ENCODE measurements at regions of chr7 and their contacts with region 1.

Region 1: GRCh38 chr7:129224251-129225205 is at the start of gene AHCYL2:
- DNase-seq: peak; percentile 95 to 98 (median 96)
- H3K4me3 ChIP-seq: peak within 1 kb of the TSS; percentile 87 to 98
- H3K4me3 Mint-ChIP-seq: peak within 1 kb of the TSS; percentile 94 to 98 (median 95)
- H3K27ac ChIP-seq: peak within 1 kb of the TSS; percentile 80
- H3K27ac Mint-ChIP-seq: peak within 1 kb of the TSS; percentile 86 to 99 (median 97)
- H3K4me1 ChIP-seq: peaks cover 28% of the 10 kb centered on the region
- H3K4me1 Mint-ChIP-seq: peaks cover 28 to 48% (median 35%) of the 10 kb centered on the region in 4 donors
- H3K27me3 ChIP-seq: no peaks in the 10 kb centered on the region
- H3K27me3 Mint-ChIP-seq: no peaks in the 10 kb centered on the region
- total RNA-seq, gene AHCYL2: 15.4 to 16.5 TPM

Region 2: DNA sequence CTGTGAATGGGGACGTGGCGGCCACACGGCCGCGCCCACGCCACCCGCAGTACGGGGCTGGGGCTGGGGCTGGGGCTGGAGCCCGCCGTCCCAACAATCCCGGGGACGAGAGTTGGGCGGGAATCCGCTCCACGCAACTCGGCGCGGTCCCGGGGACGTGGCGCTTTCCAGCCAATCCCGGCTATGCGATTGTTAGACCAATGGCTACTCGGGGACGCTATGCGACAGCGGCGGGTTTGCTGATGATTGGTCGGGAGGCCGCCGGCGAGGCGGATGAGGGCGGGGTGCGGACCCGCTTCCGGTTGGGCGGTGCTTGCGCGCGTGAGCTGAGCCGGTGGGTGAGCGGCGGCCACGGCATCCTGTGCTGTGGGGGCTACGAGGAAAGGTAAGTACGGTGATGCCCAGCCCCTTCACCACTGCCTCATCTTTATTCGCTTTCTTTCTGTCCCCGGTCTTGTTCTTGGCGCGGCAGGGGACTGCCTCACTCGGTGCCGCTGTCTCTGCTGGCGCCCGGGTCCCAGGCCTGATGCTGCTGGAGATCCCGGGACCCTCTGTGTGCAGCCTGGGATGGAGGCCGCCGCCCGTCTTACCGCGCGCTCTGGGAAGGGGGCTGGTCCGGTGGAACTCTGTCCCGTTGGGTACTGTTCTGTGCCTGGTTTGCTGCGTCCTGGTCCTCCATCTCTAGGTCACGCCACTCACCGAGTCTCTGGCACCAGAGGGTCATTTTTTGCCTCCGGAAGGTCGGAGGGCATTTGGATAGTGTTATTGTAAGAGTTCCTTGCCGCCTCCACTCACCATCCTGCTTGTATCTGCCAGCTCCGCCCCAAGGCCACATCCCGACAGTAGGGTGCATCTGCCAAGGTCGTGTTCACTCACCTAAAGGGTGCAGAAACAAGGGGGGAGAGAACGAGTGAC is 485.2 kb before region 1 on chr7 and contains the start of gene CALU:
- CTCF ChIA-PET with region 1: no interaction called
- POLR2A ChIA-PET with region 1: no interaction called
- intact Hi-C with region 1: loop called (anchors 5 kb)
- DNase-seq: peak; percentile 93 to 95 (median 94)
- H3K4me3 ChIP-seq: peak within 1 kb of the TSS; percentile 80 to 82
- H3K4me3 Mint-ChIP-seq: peak within 1 kb of the TSS; percentile 98 to 100 (median 99)
- H3K27ac ChIP-seq: peak within 1 kb of the TSS; percentile 91
- H3K27ac Mint-ChIP-seq: peak within 1 kb of the TSS; percentile 97 to 100 (median 98)
- H3K4me1 ChIP-seq: peaks cover 38% of the 10 kb centered on the region
- H3K4me1 Mint-ChIP-seq: peaks cover 27 to 50% (median 39%) of the 10 kb centered on the region in 4 donors
- H3K27me3 ChIP-seq: no peaks in the 10 kb centered on the region
- H3K27me3 Mint-ChIP-seq: peaks cover 0 to 3% of the 10 kb centered on the region in 2 donors
- total RNA-seq, gene CALU: 18.4 to 20.6 TPM

Region 3: GRCh38 chr7:128940494-128941322 is 283.8 kb before region 1 on chr7:
- CTCF ChIA-PET with region 1: no interaction called
- POLR2A ChIA-PET with region 1: no interaction called
- intact Hi-C with region 1: no loop called
- DNase-seq: peak in 2 of 5 donors; percentile 9 to 24
- H3K4me3 ChIP-seq: peak overlapping the region in 1 of 2 donors; percentile 6
- H3K4me3 Mint-ChIP-seq: peak overlapping the region; percentile 58 to 97 (median 93)
- H3K27ac ChIP-seq: peak overlapping the region; percentile 60
- H3K27ac Mint-ChIP-seq: peak overlapping the region; percentile 75 to 91 (median 84)
- H3K4me1 ChIP-seq: peaks cover 32% of the 10 kb centered on the region
- H3K4me1 Mint-ChIP-seq: peaks cover 15 to 43% (median 32%) of the 10 kb centered on the region in 4 donors
- H3K27me3 ChIP-seq: no peaks in the 10 kb centered on the region
- H3K27me3 Mint-ChIP-seq: peaks cover 0 to 3% of the 10 kb centered on the region in 2 donors

Region 4: GRCh38 chr7:129041142-129042085 is 183.1 kb before region 1 on chr7:
- CTCF ChIA-PET with region 1: no interaction called
- POLR2A ChIA-PET with region 1: no interaction called
- intact Hi-C with region 1: no loop called
- DNase-seq: no peak
- H3K4me3 ChIP-seq: no peak overlapping the region
- H3K4me3 Mint-ChIP-seq: peak overlapping the region in 2 of 8 donors; percentile 1 to 11
- H3K27ac ChIP-seq: no peak overlapping the region
- H3K27ac Mint-ChIP-seq: peak overlapping the region in 5 of 7 donors; percentile 6 to 79 (median 22)
- H3K4me1 ChIP-seq: peaks cover 58% of the 10 kb centered on the region
- H3K4me1 Mint-ChIP-seq: peaks cover 52 to 81% (median 66%) of the 10 kb centered on the region in 4 donors
- H3K27me3 ChIP-seq: no peaks in the 10 kb centered on the region
- H3K27me3 Mint-ChIP-seq: no peaks in the 10 kb centered on the region

Region 5: DNA sequence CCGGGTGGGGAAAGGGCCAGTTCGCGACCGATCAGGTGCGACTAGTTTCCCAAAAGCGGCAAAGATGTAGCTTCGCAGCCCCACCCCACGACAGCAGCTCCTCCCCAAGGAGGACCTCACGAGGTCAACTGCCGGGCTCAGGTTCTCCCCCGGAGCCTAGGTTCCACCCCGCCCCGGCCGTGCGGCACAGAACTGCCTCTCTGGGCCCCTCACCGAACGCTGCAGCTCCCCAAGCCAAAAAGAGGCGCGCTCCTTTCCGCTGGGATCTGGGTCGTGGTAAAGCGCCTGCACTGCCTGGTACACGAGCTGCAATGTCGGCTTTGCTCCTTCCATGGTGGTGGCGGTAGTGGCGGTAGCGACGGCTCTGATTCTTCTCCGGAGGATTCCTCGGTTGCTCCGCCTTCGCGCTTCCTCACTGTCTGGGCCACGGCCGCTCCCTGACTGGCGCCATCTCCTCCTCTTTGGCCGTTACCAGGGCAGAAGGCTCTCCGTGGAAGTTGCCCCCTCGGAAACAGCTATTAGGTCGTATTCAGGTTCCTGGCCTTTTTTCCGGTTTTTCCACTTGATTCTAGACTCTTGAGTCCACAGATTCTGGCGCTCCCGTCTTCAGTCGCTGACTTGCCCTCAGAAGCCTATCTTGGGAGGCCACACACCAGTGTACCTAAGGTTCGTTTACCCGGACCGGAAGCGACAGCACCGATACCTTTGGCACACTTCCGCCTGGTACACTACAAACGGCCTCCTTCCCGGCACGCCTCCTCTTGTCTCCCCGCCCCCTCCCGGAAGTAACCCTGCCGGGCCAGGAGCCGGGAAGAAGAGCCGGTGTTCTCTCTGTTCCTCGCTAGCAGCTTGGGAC is 169.9 kb before region 1 on chr7 and contains the start of gene TNPO3:
- CTCF ChIA-PET with region 1: no interaction called
- POLR2A ChIA-PET with region 1: no interaction called
- intact Hi-C with region 1: loop called (anchors 1 kb)
- DNase-seq: peak; percentile 87 to 91 (median 88)
- H3K4me3 ChIP-seq: peak within 1 kb of the TSS; percentile 80 to 91
- H3K4me3 Mint-ChIP-seq: peak within 1 kb of the TSS; percentile 94 to 100 (median 98)
- H3K27ac ChIP-seq: peak within 1 kb of the TSS; percentile 82
- H3K27ac Mint-ChIP-seq: peak within 1 kb of the TSS; percentile 98 to 100 (median 99)
- H3K4me1 ChIP-seq: peaks cover 31% of the 10 kb centered on the region
- H3K4me1 Mint-ChIP-seq: peaks cover 20 to 51% (median 38%) of the 10 kb centered on the region in 4 donors
- H3K27me3 ChIP-seq: no peaks in the 10 kb centered on the region
- H3K27me3 Mint-ChIP-seq: peaks cover 3 to 7% of the 10 kb centered on the region in 2 donors
- total RNA-seq, gene TNPO3: 41.7 to 44.5 TPM

Region 6: DNA sequence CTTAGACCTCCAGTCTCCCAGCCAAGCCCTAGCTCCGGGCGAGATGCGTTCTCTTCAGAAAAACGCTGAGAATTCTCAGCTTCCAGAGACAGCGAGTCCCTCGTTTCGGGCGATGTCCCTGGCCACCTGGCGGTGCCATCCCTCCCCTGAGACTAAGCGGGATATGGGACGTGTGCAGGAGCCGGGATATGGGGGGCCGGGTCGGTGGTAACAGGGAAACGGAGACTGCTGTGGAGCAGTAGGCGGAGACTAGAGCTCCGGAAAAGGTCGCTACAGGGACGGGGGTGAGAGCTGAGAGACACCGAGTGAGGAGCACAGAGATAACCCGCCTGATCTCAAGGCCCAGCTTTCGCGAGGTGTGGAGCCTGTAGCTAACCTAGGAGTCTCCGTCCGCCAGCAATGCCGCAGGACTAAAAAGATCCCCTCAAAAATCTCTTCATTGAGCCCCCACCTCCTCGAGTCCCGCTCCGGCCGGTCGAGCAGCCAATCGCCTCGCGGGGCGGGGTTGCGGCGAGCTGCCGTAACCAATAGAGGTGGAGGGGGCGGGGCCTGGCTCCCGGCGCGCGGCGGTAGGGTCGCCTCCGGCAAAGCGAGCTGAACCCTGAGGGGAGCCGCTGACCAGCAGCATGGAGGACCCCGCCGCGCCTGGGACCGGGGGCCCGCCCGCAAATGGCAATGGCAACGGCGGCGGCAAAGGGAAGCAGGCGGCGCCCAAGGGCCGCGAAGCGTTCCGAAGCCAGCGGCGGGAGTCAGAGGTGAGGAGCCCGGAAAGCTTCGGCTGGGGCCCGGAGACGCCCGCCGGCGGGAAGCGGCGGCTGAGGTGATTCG is 209.5 kb after region 1 on chr7 and contains the start of gene STRIP2:
- CTCF ChIA-PET with region 1: no interaction called
- POLR2A ChIA-PET with region 1: interaction called, 3 read pairs
- intact Hi-C with region 1: loop called (anchors 1 kb)
- DNase-seq: peak; percentile 84 to 90 (median 87)
- H3K4me3 ChIP-seq: peak within 1 kb of the TSS; percentile 85 to 92
- H3K4me3 Mint-ChIP-seq: peak within 1 kb of the TSS; percentile 92 to 98 (median 94)
- H3K27ac ChIP-seq: no peak within 1 kb of the TSS
- H3K27ac Mint-ChIP-seq: peak within 1 kb of the TSS; percentile 37 to 85 (median 71)
- H3K4me1 ChIP-seq: peaks cover 17% of the 10 kb centered on the region
- H3K4me1 Mint-ChIP-seq: peaks cover 3 to 21% (median 15%) of the 10 kb centered on the region in 4 donors
- H3K27me3 ChIP-seq: no peaks in the 10 kb centered on the region
- H3K27me3 Mint-ChIP-seq: peaks cover 5 to 25% of the 10 kb centered on the region in 2 donors
- total RNA-seq, gene STRIP2: 0.20 to 0.22 TPM

Region 7: GRCh38 chr7:129611246-129612111 is 387.0 kb after region 1 on chr7 and contains the start of gene NRF1:
- CTCF ChIA-PET with region 1: interaction called, 3 read pairs
- POLR2A ChIA-PET with region 1: interaction called, 9 read pairs
- intact Hi-C with region 1: loop called (anchors 2 kb)
- DNase-seq: peak; percentile 90 to 93 (median 93)
- H3K4me3 ChIP-seq: peak within 1 kb of the TSS; percentile 95 to 98
- H3K4me3 Mint-ChIP-seq: peak within 1 kb of the TSS; percentile 94 to 99 (median 98)
- H3K27ac ChIP-seq: peak within 1 kb of the TSS; percentile 79
- H3K27ac Mint-ChIP-seq: peak within 1 kb of the TSS; percentile 92 to 98 (median 97)
- H3K4me1 ChIP-seq: peaks cover 45% of the 10 kb centered on the region
- H3K4me1 Mint-ChIP-seq: peaks cover 38 to 69% (median 55%) of the 10 kb centered on the region in 4 donors
- H3K27me3 ChIP-seq: no peaks in the 10 kb centered on the region
- H3K27me3 Mint-ChIP-seq: no peaks in the 10 kb centered on the region
- total RNA-seq, gene NRF1: 38.1 to 40.0 TPM

Region 8: GRCh38 chr7:130050773-130051125 is 826.2 kb after region 1 on chr7:
- CTCF ChIA-PET with region 1: no interaction called
- POLR2A ChIA-PET with region 1: no interaction called
- intact Hi-C with region 1: loop called (anchors 1 kb)
- DNase-seq: no peak
- H3K4me3 ChIP-seq: peak overlapping the region; percentile 81 to 88
- H3K4me3 Mint-ChIP-seq: peak overlapping the region; percentile 97 to 99 (median 98)
- H3K27ac ChIP-seq: peak overlapping the region; percentile 49
- H3K27ac Mint-ChIP-seq: peak overlapping the region; percentile 90 to 99 (median 97)
- H3K4me1 ChIP-seq: peaks cover 6% of the 10 kb centered on the region
- H3K4me1 Mint-ChIP-seq: peaks cover 7 to 18% (median 10%) of the 10 kb centered on the region in 4 donors
- H3K27me3 ChIP-seq: no peaks in the 10 kb centered on the region
- H3K27me3 Mint-ChIP-seq: peaks cover 2% of the 10 kb centered on the region in 2 donors